AG04449 (cell line): ENCODE measurements at regions of chr18 and their contacts with region 1.

Region 1: GRCh38 chr18:3151399-3152264 is 68.1 kb downstream of the MYOM1 start:
- DNase-seq: no peak
- H3K4me3 ChIP-seq: no peak overlapping the region
- CTCF ChIP-seq: peak; percentile 52

Region 2: DNA sequence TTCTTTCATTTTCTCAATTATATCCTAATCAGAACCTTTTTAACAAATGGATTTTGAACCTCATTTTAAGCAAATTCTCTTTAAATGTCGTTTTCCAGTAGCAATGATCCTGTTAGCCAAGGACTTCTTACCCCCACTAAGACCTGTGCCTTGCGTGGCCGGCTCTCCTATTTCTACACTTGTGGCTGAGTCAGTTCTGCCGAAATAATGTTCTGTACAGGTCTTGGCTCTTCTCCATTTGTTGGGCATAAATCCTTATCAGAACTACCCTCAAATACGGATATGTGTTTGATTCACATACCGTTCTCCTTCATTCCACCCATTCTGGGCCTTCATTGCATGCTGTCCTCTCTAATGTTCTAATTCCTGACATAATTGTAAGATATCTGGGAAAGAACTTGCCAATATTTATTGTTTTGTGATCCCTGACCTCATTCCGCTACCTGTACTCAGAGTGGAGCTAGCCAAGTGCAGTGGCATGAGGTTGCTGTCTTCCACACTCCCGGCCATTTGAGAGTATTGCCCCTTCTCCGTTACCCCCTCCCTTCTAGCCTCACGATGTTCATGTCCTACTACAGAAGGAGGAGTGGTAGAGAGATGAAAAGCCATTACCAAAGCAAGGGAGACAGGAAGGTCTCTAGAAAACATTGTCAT is 10.5 kb before region 1 on chr18:
- CTCF ChIA-PET with region 1: interaction called, 14 read pairs
- POLR2A ChIA-PET with region 1: no interaction called
- DNase-seq: no peak
- H3K4me3 ChIP-seq: no peak overlapping the region
- CTCF ChIP-seq: no peak

Region 3: DNA sequence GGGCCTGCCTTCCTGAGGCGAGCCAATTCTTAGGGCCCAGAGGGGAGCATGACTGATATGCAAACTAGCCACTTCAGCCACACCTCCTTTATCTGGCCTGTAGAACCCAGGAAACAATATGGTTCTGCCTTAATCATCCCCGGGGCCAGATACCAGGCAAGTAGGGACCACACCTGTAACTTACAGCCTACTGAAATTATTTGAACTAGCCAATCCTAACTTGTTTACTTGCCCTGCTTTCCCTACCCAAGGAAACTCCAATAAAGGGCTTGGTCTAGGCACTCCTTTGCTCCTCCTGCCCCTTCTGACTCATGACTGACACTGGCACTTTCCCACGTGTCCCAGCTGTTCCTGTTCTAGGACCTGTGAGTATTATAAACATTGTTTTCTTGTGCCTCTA is 10.5 kb after region 1 on chr18:
- CTCF ChIA-PET with region 1: interaction called, 13 read pairs
- POLR2A ChIA-PET with region 1: no interaction called
- DNase-seq: no peak
- H3K4me3 ChIP-seq: no peak overlapping the region
- CTCF ChIP-seq: no peak